Pancreas (tissue), 10 donors: ENCODE measurements at regions of chr1 and their contacts with region 1.

Region 1: GRCh38 chr1:23777979-23778814 is at the start of gene PITHD1:
- DNase-seq: peak; percentile 79 to 95 (median 84)
- ATAC-seq: peak; percentile 90 to 94 (median 90)
- H3K4me3 ChIP-seq: peak within 1 kb of the TSS; percentile 45 to 92 (median 89)
- H3K27ac ChIP-seq: peak within 1 kb of the TSS; percentile 72 to 90 (median 83)
- H3K4me1 ChIP-seq: peaks cover 9 to 24% (median 16%) of the 10 kb centered on the region in 3 donors
- H3K27me3 ChIP-seq: no peaks in the 10 kb centered on the region
- CTCF ChIP-seq: no peak
- total RNA-seq, gene PITHD1: 17.3 to 20.6 (median 18.9) TPM

Region 2: GRCh38 chr1:23718482-23718881 is 59.7 kb before region 1 on chr1:
- intact Hi-C with region 1: no loop called
- DNase-seq: no peak
- ATAC-seq: peak in 3 of 4 donors; percentile 53 to 77 (median 71)
- H3K4me3 ChIP-seq: no peak overlapping the region
- H3K27ac ChIP-seq: no peak overlapping the region
- H3K4me1 ChIP-seq: no peaks in the 10 kb centered on the region
- H3K27me3 ChIP-seq: no peaks in the 10 kb centered on the region
- CTCF ChIP-seq: peak in 2 of 4 donors; percentile 9 to 13

Region 3: DNA sequence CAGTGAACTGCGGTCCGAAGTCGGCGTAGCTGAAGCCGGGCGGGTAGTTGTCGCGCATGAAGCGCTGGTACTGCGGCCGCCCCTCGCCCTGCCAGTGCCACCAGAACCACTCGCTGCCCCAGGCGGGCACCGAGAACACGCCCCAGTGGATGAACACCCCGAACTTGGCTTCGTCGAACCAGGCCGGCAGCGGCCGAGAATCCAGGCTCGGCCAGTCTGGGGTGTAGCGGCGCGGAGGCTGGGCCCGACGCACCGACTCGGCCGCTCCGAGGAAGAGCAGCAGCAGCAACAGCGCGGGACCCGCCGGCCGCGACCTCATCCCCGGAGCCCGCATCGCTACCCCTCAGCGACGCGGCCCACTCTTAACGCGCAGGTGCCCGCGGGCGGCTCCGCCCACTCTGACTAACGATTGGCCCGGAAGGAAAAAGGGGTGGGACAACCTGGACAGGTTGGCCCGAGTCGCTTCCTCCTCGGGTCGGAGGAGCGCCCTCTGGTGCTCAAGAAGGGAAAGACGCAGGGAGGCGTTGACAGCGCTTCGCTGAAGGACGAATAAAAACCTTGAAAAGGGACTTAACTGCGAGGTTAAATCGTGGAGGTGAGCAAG is 89.9 kb after region 1 on chr1 and contains the start of gene FUCA1:
- intact Hi-C with region 1: loop called in 1 of 3 experiments (anchors 10 kb)
- DNase-seq: peak; percentile 92 to 97 (median 96)
- ATAC-seq: peak; percentile 98 to 99 (median 98)
- H3K4me3 ChIP-seq: peak within 1 kb of the TSS; percentile 75 to 98 (median 87)
- H3K27ac ChIP-seq: peak within 1 kb of the TSS; percentile 31 to 66 (median 58)
- H3K4me1 ChIP-seq: peaks cover 0 to 8% (median 0%) of the 10 kb centered on the region in 3 donors
- H3K27me3 ChIP-seq: no peaks in the 10 kb centered on the region
- CTCF ChIP-seq: peak; percentile 92 to 98 (median 96)
- total RNA-seq, gene FUCA1: 8.3 to 23.4 (median 13.3) TPM

Region 4: DNA sequence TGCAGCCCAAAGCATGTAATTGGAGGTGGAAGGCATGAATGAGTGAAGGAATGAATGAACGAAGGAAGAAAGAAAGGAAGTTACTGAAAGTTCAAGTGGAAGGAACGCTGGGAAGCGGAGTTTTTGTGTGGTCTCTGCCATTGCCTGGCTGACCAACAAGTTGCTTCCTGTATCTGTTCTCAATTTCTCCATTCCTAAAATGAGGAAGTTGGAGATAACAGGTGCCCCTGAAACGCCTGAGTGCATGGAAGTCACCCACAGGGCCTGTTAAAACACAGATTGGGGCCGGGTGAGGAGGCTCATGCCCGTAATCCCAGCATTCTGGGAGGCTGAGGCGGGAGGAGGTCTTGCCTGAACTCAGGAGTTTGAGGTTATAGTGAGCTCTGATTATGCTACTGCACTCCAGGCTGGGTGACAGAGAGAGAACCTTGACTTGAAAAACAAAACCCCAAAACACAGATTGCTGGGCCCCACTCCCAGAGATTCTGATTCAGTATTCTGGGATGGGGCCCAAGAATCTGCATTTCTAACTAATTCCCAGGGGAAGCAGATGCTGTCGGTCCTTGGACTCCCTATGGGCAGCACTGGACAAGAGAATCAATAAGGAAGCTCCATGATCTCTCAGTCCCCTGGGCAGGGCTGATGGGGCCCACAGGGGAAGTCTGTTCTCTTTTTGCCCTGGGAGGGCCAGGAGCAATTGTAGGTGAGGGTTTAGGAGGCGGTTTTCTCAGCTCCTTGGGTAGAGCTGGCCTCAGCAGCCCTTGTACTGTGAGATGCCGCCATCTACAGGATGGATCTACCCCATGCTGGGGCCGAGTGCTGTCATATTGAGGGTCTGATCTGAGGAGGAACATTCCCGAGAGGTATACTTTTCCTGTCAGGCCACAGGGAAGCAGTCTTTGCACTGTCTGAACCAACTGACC is 138.3 kb after region 1 on chr1:
- intact Hi-C with region 1: loop called in 1 of 3 experiments (anchors 10 kb)
- DNase-seq: peak in 5 of 6 donors; percentile 34 to 62 (median 47)
- ATAC-seq: peak; percentile 60 to 87 (median 80)
- H3K4me3 ChIP-seq: no peak overlapping the region
- H3K27ac ChIP-seq: no peak overlapping the region
- H3K4me1 ChIP-seq: peaks cover 0 to 12% (median 11%) of the 10 kb centered on the region in 3 donors
- H3K27me3 ChIP-seq: no peaks in the 10 kb centered on the region
- CTCF ChIP-seq: peak in 3 of 4 donors; percentile 21 to 31 (median 25)